Heart right ventricle (tissue), 16 donors: ENCODE measurements at regions of chr18 and their contacts with region 1.

Region 1: DNA sequence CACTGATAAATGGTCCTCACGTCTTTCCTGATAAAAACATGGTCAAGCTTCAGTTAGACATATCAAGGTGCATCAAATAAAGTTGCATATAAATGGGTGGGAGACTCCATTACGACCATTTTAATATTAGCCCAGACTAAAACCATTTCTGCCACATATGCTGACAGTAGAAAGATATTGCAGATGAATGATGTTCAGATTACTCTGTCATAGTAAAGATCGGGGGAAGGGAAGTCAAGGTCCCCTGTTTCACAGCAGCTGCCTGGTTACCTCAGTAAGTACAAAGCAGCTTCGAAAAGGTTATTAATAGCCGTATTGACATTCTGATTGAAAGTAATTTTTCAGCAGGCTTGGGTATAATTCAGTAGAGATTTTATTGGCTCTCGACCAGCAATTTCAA is 927.7 kb upstream of the CDH2 start:
- DNase-seq: no peak
- ATAC-seq: no peak
- H3K4me3 ChIP-seq: no peak overlapping the region
- H3K27ac ChIP-seq: no peak overlapping the region
- H3K4me1 ChIP-seq: no peaks in the 10 kb centered on the region
- H3K27me3 ChIP-seq: no peaks in the 10 kb centered on the region
- CTCF ChIP-seq: no peak

Region 2: GRCh38 chr18:28946471-28946870 is 158.2 kb before region 1 on chr18:
- intact Hi-C with region 1: no loop called
- DNase-seq: no peak
- ATAC-seq: no peak
- H3K4me3 ChIP-seq: no peak overlapping the region
- H3K27ac ChIP-seq: no peak overlapping the region
- H3K4me1 ChIP-seq: no peaks in the 10 kb centered on the region
- H3K27me3 ChIP-seq: no peaks in the 10 kb centered on the region
- CTCF ChIP-seq: no peak

Region 3: GRCh38 chr18:28974504-28974903 is 130.2 kb before region 1 on chr18:
- intact Hi-C with region 1: no loop called
- DNase-seq: no peak
- ATAC-seq: no peak
- H3K4me3 ChIP-seq: no peak overlapping the region
- H3K27ac ChIP-seq: no peak overlapping the region
- H3K4me1 ChIP-seq: no peaks in the 10 kb centered on the region
- H3K27me3 ChIP-seq: no peaks in the 10 kb centered on the region
- CTCF ChIP-seq: no peak

Region 4: DNA sequence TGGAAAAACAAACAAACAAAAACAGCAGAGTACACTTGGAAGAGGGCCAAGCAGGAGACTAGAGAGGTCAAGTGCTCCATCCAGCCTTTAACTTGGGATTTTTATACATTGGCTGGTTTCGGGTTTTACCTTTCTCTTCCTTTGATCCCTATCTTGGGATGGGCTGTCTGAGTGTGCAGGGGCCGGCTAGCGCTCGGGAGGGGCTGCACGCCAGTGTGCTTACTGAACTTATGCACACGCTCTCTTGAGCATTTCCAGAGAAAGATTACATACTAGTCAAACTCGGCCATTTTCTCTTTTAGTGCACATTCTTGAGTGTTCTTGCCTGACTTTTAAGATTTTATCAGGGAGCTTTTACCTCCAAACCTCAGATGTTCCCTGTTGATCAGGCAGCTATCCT is 1230.1 kb after region 1 on chr18:
- intact Hi-C with region 1: loop called in 1 of 10 experiments (anchors 5 kb)
- DNase-seq: no peak
- ATAC-seq: no peak
- H3K4me3 ChIP-seq: no peak overlapping the region
- H3K27ac ChIP-seq: no peak overlapping the region
- H3K4me1 ChIP-seq: no peaks in the 10 kb centered on the region
- H3K27me3 ChIP-seq: no peaks in the 10 kb centered on the region
- CTCF ChIP-seq: no peak